ENCODE measurements at regions of chr7 and their contacts with region 1.

Region 1: DNA sequence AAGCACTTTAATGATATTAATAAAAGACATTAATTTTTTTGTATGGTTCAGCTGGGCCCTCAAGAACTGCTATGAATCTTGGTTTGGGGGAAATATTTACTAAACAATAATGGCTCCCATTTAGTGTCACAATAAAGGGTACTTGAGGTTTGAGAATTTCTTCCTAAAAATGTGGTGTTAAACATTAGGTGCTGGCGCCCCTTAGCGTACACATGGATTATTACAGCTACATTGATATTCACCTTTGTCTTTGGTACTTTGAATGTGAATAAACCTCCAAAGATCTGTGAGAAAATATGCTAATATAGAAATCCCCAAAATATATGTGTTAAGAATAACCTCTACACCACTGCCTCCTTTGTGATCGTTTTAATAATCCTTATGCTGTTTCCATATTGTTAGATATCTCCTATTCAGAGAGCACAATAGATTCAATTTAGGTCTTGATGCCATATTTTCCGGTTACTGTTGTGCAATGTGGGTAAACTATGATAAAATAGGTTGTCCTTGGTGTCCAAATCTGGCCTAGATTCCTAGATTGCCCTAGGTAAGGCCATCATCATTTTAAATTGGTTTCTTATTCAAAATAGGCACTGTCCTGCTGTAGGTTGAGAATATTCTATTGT is 161.8 kb upstream of the CACNA2D1 start:
- DNase-seq: peak; percentile 65
- H3K4me3 ChIP-seq: no peak overlapping the region; a peak in 1 of 4 replicates
- H3K27ac ChIP-seq: no peak overlapping the region
- H3K4me1 ChIP-seq: no peaks in the 10 kb centered on the region
- H3K27me3 ChIP-seq: no peaks in the 10 kb centered on the region
- CTCF ChIP-seq: peak; percentile 99
- EP300 ChIP-seq: 0 out of 4 replicates have a peak, but pooled peaks of 1 of the 2 experiments have one; percentile 6
- RAD21 ChIP-seq: peak; percentile 96

Region 2: DNA sequence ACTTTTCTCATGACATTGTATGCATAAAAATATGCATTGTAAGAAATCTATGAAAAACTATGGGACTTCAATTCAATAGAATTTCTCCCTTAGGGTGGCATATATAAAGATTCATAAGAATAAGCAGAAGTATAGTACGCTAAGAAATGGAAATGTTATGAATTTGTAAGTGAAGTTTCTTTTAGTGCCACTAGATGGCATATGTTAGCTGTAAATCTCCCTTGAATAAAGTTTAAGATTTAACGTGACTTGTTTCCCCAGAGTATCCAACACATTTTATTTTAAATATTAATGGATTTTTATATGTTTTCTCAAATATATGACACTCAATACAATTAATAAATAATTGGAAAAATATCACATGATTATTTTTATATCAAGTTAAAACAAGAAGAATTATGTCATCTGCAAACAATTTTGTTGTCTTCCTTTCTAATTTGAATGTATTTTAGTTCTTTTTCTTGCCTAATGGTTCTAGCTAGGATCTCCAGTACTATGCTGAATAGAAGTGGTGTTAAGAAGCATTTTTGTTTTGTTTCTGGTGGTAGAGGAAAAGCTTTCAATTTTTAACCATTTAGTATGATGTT is 1122.7 kb before region 1 on chr7:
- CTCF ChIA-PET with region 1: interaction called, 26 read pairs
- POLR2A ChIA-PET with region 1: interaction called, 3 read pairs
- DNase-seq: peak; percentile 35
- H3K4me3 ChIP-seq: no peak overlapping the region
- H3K27ac ChIP-seq: no peak overlapping the region
- H3K4me1 ChIP-seq: peaks cover 0 to 3% of the 10 kb centered on the region in 2 experiments; a peak in 2 of 4 replicates
- H3K27me3 ChIP-seq: no peaks in the 10 kb centered on the region
- CTCF ChIP-seq: peak; percentile 80
- EP300 ChIP-seq: no peak
- RAD21 ChIP-seq: peak; percentile 84

Region 3: DNA sequence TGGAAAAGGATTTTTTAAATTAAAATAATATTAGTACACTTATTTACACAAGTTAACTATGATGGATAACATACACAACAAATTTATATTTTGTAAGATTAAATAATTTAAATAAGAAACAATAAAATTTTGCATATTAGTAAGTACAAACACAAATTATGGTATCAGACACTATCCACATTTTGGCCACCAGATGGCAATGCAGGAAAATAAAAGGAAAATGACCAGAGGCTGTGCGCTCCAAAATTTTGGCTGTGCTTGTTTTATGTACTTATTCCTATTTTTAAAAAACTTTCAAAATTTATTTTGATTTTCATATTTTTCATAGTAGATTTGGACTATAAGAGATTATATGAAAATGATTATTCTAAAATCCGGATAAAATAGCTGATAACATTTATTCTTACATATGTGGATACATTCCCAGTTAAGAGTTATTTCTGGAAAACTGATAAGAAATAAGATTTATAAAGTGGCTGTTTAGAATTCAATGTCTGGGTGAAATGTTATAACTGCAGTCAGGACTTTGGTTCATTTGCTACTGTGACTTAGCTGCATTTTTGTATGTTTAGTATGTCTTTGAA is 560.8 kb before region 1 on chr7:
- CTCF ChIA-PET with region 1: interaction called, 82 read pairs
- POLR2A ChIA-PET with region 1: no interaction called
- DNase-seq: peak; percentile 16
- H3K4me3 ChIP-seq: no peak overlapping the region
- H3K27ac ChIP-seq: no peak overlapping the region
- H3K4me1 ChIP-seq: peaks cover 14 to 29% of the 10 kb centered on the region in 2 experiments; a peak in 3 of 4 replicates
- H3K27me3 ChIP-seq: no peaks in the 10 kb centered on the region
- CTCF ChIP-seq: peak; percentile 89
- EP300 ChIP-seq: 0 out of 4 replicates have a peak, but pooled peaks of 1 of the 2 experiments have one; percentile 16
- RAD21 ChIP-seq: peak; percentile 97

Region 4: DNA sequence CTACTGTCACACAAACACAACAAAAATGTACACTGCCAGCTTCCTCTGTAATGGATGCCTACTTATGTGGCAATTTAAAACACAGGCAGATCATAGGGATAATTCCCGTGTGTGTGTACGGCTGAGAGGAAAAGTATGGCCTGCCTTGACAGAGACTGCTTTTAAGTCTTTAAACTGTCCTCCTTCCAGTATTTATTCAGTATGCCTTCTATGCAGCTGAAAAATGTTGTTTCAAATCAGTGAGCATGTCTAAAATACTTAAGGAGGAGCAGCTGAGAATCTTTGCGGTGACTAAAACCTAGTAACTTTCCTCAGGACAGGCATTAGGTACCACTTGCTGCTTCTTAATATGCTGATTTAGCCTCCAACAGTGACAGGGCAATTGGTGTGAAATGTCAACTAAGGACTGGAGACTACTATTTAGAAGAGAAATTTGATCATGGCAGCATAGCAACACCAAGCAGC is 288.1 kb before region 1 on chr7:
- CTCF ChIA-PET with region 1: no interaction called
- POLR2A ChIA-PET with region 1: no interaction called
- DNase-seq: no peak
- H3K4me3 ChIP-seq: no peak overlapping the region
- H3K27ac ChIP-seq: peak overlapping the region in 1 of 2 experiments; percentile 96; a peak in 2 of 4 replicates
- H3K4me1 ChIP-seq: peaks cover 10 to 58% of the 10 kb centered on the region in 2 experiments; a peak in 3 of 4 replicates
- H3K27me3 ChIP-seq: no peaks in the 10 kb centered on the region
- CTCF ChIP-seq: no peak
- EP300 ChIP-seq: no peak
- RAD21 ChIP-seq: no peak

Region 5: GRCh38 chr7:82593780-82594179 is 11.6 kb before region 1 on chr7:
- CTCF ChIA-PET with region 1: interaction called, 18 read pairs
- POLR2A ChIA-PET with region 1: no interaction called
- DNase-seq: no peak
- H3K4me3 ChIP-seq: no peak overlapping the region
- H3K27ac ChIP-seq: no peak overlapping the region
- H3K4me1 ChIP-seq: peaks cover 0 to 6% of the 10 kb centered on the region in 2 experiments; a peak in 3 of 4 replicates
- H3K27me3 ChIP-seq: no peaks in the 10 kb centered on the region
- CTCF ChIP-seq: no peak
- EP300 ChIP-seq: 0 out of 4 replicates have a peak, but pooled peaks of 1 of the 2 experiments have one; percentile 10
- RAD21 ChIP-seq: no peak

Region 6: GRCh38 chr7:82624337-82624736 is 19.0 kb after region 1 on chr7:
- CTCF ChIA-PET with region 1: interaction called, 18 read pairs
- POLR2A ChIA-PET with region 1: no interaction called
- DNase-seq: no peak
- H3K4me3 ChIP-seq: no peak overlapping the region
- H3K27ac ChIP-seq: peak overlapping the region in 1 of 2 experiments; percentile 67; a peak in 2 of 4 replicates
- H3K4me1 ChIP-seq: peaks cover 8 to 10% of the 10 kb centered on the region in 2 experiments; a peak in 3 of 4 replicates
- H3K27me3 ChIP-seq: no peaks in the 10 kb centered on the region
- CTCF ChIP-seq: no peak
- EP300 ChIP-seq: peak in 1 of 2 experiments; percentile 42; a peak in 2 of 4 replicates
- RAD21 ChIP-seq: no peak

Region 7: DNA sequence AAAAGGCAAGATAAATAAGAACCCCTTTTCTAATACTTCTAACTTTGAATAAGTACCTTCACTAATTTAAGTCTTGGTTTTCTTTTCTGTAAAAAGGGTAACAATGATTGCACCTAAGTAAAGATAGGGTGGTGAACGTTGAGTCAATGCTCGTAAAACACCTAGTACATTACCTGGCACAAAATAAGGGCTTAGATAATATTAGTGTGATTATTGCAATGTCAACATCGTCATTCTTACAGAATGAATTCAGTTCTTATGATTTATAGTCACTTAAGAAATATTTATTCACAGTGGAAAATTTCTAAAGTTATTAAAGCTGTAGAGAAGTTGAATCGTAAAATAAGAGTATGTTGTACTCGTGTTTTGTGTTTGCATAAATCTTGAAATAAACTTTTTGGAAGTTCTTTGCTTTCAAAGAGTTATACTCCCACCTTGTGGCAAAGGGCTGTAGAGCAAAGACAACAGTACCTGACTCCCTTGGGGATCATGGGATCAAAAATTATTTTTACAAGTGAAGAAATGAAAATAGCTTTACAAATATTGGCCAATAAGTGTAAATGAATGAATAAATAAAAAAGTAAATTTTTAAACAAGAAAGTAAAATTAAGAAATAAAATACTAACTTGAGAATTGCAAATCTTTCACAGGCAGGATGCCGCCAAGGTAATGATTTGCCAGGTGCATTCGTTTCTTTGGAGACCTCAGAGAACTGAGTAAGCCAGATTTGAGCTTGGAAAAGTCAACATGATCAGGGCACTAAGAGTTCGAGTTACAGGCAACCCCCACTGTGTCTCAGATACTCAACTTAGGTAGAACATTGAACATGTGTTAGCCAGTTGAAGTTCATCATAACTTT is 124.0 kb after region 1 on chr7:
- CTCF ChIA-PET with region 1: interaction called, 25 read pairs
- POLR2A ChIA-PET with region 1: no interaction called
- DNase-seq: peak; percentile 52
- H3K4me3 ChIP-seq: no peak overlapping the region; a peak in 1 of 4 replicates
- H3K27ac ChIP-seq: no peak overlapping the region
- H3K4me1 ChIP-seq: peaks cover 0 to 3% of the 10 kb centered on the region in 2 experiments; a peak in 1 of 4 replicates
- H3K27me3 ChIP-seq: no peaks in the 10 kb centered on the region
- CTCF ChIP-seq: peak; percentile 99
- EP300 ChIP-seq: no peak
- RAD21 ChIP-seq: peak; percentile 93

Measured in SK-N-SH (cell line).